ENCODE measurements at regions of chr22 and their contacts with region 1.

Region 1: DNA sequence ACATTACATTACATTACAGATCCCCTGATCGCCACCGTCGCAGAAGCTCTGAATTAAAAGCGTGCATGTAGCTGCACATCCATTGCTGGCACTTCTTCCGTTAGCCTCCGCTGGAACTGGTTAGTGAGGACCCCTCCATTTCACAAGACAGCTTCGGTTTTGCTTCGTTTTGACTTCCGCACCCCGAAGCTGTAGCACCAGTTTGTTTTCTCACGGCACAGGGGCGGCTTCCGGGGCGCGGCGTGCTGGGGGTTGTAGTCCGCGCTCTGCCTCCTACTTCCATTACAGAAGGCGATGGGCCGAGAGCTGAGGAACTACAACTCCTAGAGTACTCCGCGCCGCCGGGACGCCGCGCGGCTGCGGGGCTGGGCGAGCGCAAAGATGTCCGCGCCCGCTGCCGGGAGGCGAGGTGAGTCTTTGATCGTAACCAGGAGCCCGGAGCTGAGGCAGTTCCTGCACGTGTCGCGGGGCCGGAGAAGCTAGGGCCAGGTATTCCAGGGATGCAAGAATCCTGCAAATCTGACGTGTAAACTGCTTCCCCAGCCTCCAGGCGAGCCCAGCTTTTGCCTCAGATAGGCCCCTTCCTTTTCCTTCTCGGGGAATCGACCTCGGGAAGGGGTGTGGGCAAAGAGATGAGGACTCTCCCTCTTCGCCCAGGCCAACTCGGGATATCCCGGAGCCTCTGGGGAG is at the start of gene PEX26:
- DNase-seq: peak; percentile 94 to 97
- H3K4me3 ChIP-seq: peak within 1 kb of the TSS; percentile 71 to 86 (median 84)
- H3K27ac ChIP-seq: peak within 1 kb of the TSS; percentile 73 to 83 (median 75)
- H3K4me1 ChIP-seq: peaks cover 27 to 30% of the 10 kb centered on the region in 2 donors
- H3K27me3 ChIP-seq: no peaks in the 10 kb centered on the region
- CTCF ChIP-seq: no peak
- POLR2A ChIP-seq: peak; percentile 51 to 78
- total RNA-seq, gene PEX26: 29.4 to 49.6 (median 39.4) TPM

Region 2: GRCh38 chr22:17742527-17742902 is 335.3 kb before region 1 on chr22:
- intact Hi-C with region 1: loop called (anchors 5 kb)
- DNase-seq: peak; percentile 54 to 68
- H3K4me3 ChIP-seq: no peak overlapping the region
- H3K27ac ChIP-seq: no peak overlapping the region
- H3K4me1 ChIP-seq: no peaks in the 10 kb centered on the region
- H3K27me3 ChIP-seq: no peaks in the 10 kb centered on the region
- CTCF ChIP-seq: peak; percentile 44 to 86 (median 63)
- POLR2A ChIP-seq: no peak

Region 3: GRCh38 chr22:17830043-17830961 is 247.5 kb before region 1 on chr22:
- intact Hi-C with region 1: loop called (anchors 2 kb)
- DNase-seq: peak; percentile 88 to 92
- H3K4me3 ChIP-seq: no peak overlapping the region
- H3K27ac ChIP-seq: peak overlapping the region in 1 of 3 donors; percentile 97
- H3K4me1 ChIP-seq: peaks cover 22 to 48% of the 10 kb centered on the region in 2 donors
- H3K27me3 ChIP-seq: no peaks in the 10 kb centered on the region
- CTCF ChIP-seq: peak; percentile 98 to 100 (median 99)
- POLR2A ChIP-seq: peak in 1 of 2 donors; percentile 13

Region 4: DNA sequence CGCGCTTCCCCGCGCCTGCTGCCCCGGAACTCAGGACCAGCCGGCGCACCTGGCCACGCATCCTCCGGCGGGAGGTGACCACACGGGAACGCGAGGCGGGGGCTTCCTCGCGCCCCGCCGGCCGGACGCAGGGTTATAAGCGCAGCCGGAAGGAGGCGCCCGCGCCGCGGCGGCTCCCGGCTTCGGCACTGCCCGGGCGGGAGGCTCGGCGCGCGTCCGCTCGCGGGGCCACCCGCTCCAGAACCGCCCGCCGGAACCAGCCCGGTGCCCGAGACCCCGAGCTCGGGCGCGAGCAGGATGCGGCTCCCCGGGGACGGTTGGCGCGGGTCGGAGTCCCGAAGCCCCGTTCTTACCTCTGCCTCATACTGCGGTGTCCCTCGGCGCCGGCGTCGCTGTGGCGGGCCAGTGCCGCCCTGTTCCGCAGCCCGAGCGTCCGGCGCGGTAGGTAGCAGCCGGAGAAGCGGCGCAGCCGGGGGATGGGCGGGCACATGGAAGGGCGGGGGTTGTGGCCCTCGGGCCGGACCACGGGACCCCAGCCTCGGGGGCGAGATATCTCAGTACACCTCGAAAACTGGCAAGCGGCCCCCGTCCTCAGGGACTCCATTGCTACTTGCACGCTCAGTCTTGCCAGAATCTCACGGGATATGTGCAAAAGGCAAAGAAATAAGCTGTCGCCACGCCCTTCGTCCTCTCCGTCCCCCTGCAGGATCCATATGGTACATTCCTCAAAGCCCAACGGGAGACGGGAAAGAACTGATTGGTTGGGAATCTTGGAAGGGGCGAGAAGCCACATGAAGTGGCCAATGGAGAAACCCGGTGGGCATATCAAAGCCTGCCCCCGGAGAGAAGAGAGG is 76.5 kb before region 1 on chr22:
- intact Hi-C with region 1: loop called (anchors 5 kb)
- DNase-seq: peak; percentile 88 to 90
- H3K4me3 ChIP-seq: peak overlapping the region; percentile 31 to 61 (median 51)
- H3K27ac ChIP-seq: peak overlapping the region; percentile 87 to 93 (median 89)
- H3K4me1 ChIP-seq: peaks cover 9 to 22% of the 10 kb centered on the region in 2 donors
- H3K27me3 ChIP-seq: no peaks in the 10 kb centered on the region
- CTCF ChIP-seq: peak in 4 of 6 experiments; percentile 12 to 57 (median 43)
- POLR2A ChIP-seq: peak; percentile 68 to 94

Region 5: DNA sequence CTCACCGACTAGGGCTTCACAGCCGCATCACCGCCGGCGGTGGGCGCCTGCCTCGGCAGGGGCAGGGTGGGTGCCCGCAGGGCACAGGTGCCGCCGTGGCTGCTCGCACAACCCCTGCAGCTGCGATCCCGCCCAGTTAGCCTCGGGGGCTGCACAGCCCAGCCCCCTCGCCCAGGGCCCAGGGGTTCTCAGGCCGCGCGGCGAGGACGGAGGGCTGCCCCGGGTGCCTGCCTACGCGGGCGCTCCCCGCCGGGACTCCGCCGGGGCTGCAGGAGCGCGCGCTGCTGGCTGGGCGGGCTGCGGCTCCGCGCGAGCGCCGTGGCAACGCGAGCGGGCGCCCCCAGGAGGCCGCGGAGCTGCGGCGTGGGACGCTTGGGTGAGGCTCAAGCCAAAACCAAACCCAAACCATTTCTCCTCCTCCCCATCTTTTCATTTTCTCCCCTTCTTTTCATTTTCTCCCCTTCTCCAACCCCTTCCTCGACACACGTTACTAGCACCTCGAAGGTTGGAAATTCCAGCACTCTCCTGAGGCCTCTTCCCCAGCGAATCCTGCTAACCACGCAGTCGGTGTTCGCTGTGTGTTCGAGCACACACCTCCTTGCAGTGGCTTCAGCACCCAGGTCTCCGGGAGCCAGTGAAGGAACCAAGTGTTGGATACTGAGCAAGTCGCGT is 53.4 kb before region 1 on chr22 and contains the start of gene MICAL3:
- intact Hi-C with region 1: loop called (anchors 10 kb)
- DNase-seq: peak; percentile 65 to 69
- H3K4me3 ChIP-seq: peak within 1 kb of the TSS; percentile 28 to 47 (median 43)
- H3K27ac ChIP-seq: peak within 1 kb of the TSS in 2 of 3 donors; percentile 43 to 44
- H3K4me1 ChIP-seq: peaks cover 8 to 17% of the 10 kb centered on the region in 2 donors
- H3K27me3 ChIP-seq: no peaks in the 10 kb centered on the region
- CTCF ChIP-seq: peak in 4 of 6 experiments; percentile 36 to 85 (median 76)
- POLR2A ChIP-seq: peak in 1 of 2 donors; percentile 33
- total RNA-seq, gene MICAL3: 31.8 to 53.8 (median 43.6) TPM

Region 6: DNA sequence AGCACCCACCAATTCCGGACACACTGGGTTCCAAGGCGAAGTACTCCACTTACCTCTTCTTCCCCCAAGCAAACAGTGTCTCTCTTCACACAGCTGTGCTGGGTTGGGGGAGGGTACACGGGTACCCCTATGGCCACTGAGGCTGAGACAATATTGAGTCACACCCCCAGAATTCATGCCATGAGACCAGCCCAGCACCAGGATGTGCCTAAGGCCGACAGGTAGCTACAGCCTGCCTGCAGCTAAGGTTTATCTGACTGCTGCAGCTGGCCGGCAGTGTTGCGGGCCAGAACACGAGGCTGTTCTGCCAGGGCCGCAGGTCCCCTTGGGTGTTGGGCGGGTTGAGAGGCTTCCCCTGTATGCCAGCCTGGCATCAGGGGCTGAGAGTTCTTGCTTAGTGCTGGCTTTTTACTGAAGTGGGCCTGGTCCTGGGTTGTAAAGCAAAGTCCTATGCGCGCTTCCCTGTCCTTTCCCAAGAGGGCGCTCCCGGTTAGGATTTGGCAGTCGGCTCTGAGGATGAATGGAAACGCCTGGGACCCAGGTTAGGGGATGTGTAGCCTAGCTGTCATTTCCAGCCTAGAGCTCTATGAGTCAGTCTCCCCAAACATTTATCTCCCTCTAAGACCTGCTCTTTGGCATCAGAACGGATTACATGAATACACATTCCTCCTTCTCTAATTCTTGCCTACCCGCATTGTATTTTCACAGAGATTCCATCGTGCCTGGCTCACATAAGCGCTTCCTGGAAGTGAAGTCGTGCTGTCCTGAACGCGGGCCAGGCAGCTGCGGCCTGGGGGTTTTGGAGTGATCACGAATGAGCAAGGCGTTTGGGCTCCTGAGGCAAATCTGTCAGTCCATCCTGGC is 79.3 kb after region 1 on chr22:
- intact Hi-C with region 1: no loop called
- DNase-seq: peak; percentile 48 to 66
- H3K4me3 ChIP-seq: no peak overlapping the region
- H3K27ac ChIP-seq: peak overlapping the region in 1 of 3 donors; percentile 20
- H3K4me1 ChIP-seq: peaks cover 0 to 4% of the 10 kb centered on the region in 2 donors
- H3K27me3 ChIP-seq: no peaks in the 10 kb centered on the region
- CTCF ChIP-seq: peak in 4 of 6 experiments; percentile 6 to 59 (median 46)
- POLR2A ChIP-seq: no peak